GM12878 (cell line): ENCODE measurements at regions of chr5 and their contacts with region 1.

Region 1: GRCh38 chr5:157761690-157762621 is 18.4 kb downstream of the LSM11 start:
- DNase-seq: no peak
- ATAC-seq: peak; percentile 99
- H3K4me3 ChIP-seq: no peak overlapping the region
- H3K27ac ChIP-seq: no peak overlapping the region
- H3K4me1 ChIP-seq: 0 out of 2 replicates have a peak, but pooled peaks cover 3% of the 10 kb centered on the region
- H3K27me3 ChIP-seq: no peaks in the 10 kb centered on the region
- CTCF ChIP-seq: peak; percentile 71 to 81 (median 79)
- EP300 ChIP-seq: no peak
- POLR2A ChIP-seq: no peak
- RAD21 ChIP-seq: peak; percentile 73

Region 2: DNA sequence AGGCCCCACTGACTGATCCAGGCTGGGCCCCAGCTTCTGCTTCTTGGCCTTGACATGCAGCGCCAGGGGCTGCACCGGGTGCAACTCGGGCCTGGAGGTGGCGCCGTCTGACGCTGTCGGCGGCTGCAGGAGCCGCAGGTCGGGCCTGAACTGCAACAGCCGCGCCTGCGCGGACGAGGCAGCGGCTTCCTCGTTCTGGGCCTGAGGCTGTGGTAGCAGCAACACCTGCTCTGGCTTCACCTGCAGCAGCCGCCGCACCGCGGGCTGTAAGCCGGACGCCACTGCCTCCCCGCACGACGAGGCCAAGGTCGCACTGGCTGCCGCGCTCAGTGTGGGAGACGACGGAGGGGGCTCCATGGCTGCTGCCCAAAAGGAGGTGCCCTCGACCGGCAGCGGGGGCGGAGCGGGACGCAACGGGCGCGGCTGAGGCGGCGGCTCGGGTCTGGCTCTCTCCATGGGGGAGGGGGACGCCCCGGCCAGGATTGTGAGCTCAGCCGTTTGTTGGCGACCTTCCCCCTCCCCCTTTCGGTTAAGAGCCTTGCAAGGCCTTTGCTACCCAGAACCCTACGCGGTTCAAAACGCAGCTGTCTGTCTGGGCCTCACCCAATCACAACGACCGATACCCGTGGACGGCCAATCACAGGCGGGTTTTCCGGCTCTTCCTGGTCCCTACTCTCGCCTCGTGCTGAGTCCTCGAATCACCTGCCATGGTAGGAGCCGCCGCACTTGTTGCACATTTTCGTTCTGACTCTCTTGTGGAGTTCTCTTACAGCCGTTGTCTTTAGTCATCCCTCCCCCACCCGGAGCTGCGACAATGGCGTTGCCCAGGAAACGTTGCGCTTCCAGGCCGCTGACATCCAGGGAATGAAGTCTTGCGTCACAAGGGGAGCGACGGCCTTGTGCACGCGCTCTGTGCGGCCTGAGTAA is 110.1 kb before region 1 on chr5 and contains the start of gene SOX30:
- CTCF ChIA-PET with region 1: no interaction called
- POLR2A ChIA-PET with region 1: no interaction called
- RAD21 ChIA-PET with region 1: no interaction called
- SMC1A ChIA-PET with region 1: no interaction called
- in situ Hi-C with region 1: no loop called
- intact Hi-C with region 1: no loop called
- DNase-seq: peak; percentile 21
- ATAC-seq: peak; percentile 98
- H3K4me3 ChIP-seq: no peak within 1 kb of the TSS; the same call in 1 of the 2 replicates
- H3K27ac ChIP-seq: no peak within 1 kb of the TSS
- H3K4me1 ChIP-seq: no peaks in the 10 kb centered on the region
- H3K27me3 ChIP-seq: no peaks in the 10 kb centered on the region
- CTCF ChIP-seq: peak; percentile 29 to 40 (median 32); a peak in 4 of 6 replicates
- EP300 ChIP-seq: no peak
- POLR2A ChIP-seq: peak; percentile 69
- RAD21 ChIP-seq: peak; percentile 36; the same call in 1 of the 2 replicates
- polyA plus RNA-seq, gene SOX30: 0.06 to 0.07 TPM

Region 3: DNA sequence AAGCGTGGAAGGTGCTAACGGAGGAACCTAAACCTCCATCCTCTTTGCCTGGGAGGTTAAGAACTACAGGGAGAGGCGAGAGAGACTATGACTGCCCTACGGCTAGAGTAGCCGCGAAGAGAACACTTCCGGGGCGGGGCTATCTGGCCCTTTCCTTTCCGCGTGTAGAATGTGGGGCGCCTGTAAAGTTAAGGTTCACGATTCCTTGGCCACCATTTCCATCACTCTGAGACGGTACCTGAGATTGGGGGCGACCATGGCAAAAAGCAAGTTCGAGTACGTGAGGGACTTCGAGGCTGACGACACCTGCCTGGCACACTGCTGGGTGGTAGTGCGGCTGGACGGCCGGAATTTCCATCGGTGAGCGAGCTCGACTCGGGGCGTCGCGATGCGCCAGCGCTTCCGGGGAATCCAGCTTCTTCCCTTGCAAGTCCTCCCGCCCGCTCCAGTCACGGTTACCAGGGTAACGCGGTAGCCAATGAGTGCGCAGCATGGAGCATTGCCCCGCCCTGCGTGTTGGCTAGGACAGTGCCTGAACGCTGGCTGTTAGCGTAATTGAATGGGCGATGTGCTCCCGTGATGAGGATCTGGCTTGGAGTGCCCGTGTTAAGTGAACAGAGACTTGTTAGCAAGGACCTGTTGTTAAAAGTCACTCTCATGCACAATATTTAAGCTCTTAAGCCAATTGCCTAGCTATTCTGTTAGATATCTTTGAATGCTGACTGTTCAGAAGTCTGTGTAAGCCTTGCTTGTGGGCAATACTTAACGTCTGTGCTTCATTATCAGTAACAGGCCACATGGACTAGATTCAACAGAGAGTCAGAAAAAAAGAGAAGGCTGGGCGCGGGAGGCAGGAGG is 30.5 kb before region 1 on chr5 and contains the start of gene THG1L:
- CTCF ChIA-PET with region 1: no interaction called
- POLR2A ChIA-PET with region 1: no interaction called
- RAD21 ChIA-PET with region 1: no interaction called
- SMC1A ChIA-PET with region 1: no interaction called
- in situ Hi-C with region 1: no loop called
- intact Hi-C with region 1: no loop called
- DNase-seq: peak; percentile 94
- ATAC-seq: peak; percentile 92
- H3K4me3 ChIP-seq: peak within 1 kb of the TSS; percentile 85
- H3K27ac ChIP-seq: peak within 1 kb of the TSS; percentile 92
- H3K4me1 ChIP-seq: peaks cover 21% of the 10 kb centered on the region
- H3K27me3 ChIP-seq: no peaks in the 10 kb centered on the region
- CTCF ChIP-seq: no peak
- EP300 ChIP-seq: no peak
- POLR2A ChIP-seq: peak; percentile 97
- RAD21 ChIP-seq: no peak
- polyA plus RNA-seq, gene THG1L: 37.2 to 58.0 TPM

Region 4: GRCh38 chr5:157748760-157749461 is 13.0 kb before region 1 on chr5:
- CTCF ChIA-PET with region 1: interaction called, 19 read pairs
- POLR2A ChIA-PET with region 1: no interaction called
- RAD21 ChIA-PET with region 1: no interaction called
- SMC1A ChIA-PET with region 1: interaction called, 3 read pairs
- in situ Hi-C with region 1: no loop called
- intact Hi-C with region 1: no loop called
- DNase-seq: no peak
- ATAC-seq: no peak
- H3K4me3 ChIP-seq: no peak overlapping the region
- H3K27ac ChIP-seq: no peak overlapping the region
- H3K4me1 ChIP-seq: peaks cover 7% of the 10 kb centered on the region; the same call in 1 of the 2 replicates
- H3K27me3 ChIP-seq: no peaks in the 10 kb centered on the region
- CTCF ChIP-seq: no peak
- EP300 ChIP-seq: no peak
- POLR2A ChIP-seq: no peak
- RAD21 ChIP-seq: no peak

Region 5: GRCh38 chr5:157793301-157793700 is 31.3 kb after region 1 on chr5:
- CTCF ChIA-PET with region 1: interaction called, 15 read pairs
- POLR2A ChIA-PET with region 1: no interaction called
- RAD21 ChIA-PET with region 1: no interaction called
- SMC1A ChIA-PET with region 1: interaction called, 3 read pairs
- in situ Hi-C with region 1: no loop called
- intact Hi-C with region 1: no loop called
- DNase-seq: no peak
- ATAC-seq: no peak
- H3K4me3 ChIP-seq: no peak overlapping the region
- H3K27ac ChIP-seq: no peak overlapping the region
- H3K4me1 ChIP-seq: no peaks in the 10 kb centered on the region
- H3K27me3 ChIP-seq: no peaks in the 10 kb centered on the region
- CTCF ChIP-seq: no peak
- EP300 ChIP-seq: no peak
- POLR2A ChIP-seq: no peak
- RAD21 ChIP-seq: no peak

Region 6: DNA sequence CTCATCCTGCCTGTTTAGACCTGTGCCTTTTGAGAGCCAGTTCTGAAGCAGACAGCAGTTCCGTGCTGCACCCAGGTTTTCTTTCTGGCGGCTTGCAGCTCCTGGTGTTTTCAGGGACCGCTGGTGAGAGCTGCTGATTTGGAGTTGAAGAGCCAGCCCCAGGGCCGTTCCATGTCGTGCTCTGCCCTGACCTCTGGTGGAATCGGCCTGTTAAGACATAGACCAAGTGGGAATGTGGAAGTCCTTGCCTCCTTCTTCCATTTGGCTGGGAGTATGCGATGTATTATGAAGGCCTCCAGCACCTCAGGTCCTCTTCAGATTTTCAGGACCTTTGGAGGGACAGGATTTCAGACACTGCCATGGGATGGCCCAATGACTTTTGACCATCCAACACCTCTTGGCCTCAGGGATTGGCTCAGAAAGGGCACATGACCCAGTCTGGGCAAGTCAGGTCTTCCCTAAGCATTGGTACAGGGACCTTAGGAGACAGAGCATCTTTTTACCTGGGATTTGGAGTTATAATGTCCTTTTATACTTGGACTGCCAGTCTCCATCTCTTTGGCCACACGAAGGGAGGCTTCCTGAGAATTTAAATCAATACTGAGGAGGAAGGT is 233.1 kb after region 1 on chr5:
- CTCF ChIA-PET with region 1: interaction called, 25 read pairs
- POLR2A ChIA-PET with region 1: interaction called, 3 read pairs
- RAD21 ChIA-PET with region 1: interaction called, 7 read pairs
- SMC1A ChIA-PET with region 1: interaction called, 12 read pairs
- in situ Hi-C with region 1: no loop called
- intact Hi-C with region 1: loop called (anchors 1 kb)
- DNase-seq: peak; percentile 3
- ATAC-seq: peak; percentile 98
- H3K4me3 ChIP-seq: no peak overlapping the region
- H3K27ac ChIP-seq: no peak overlapping the region
- H3K4me1 ChIP-seq: no peaks in the 10 kb centered on the region
- H3K27me3 ChIP-seq: no peaks in the 10 kb centered on the region
- CTCF ChIP-seq: peak; percentile 75 to 83 (median 82)
- EP300 ChIP-seq: no peak
- POLR2A ChIP-seq: no peak
- RAD21 ChIP-seq: peak; percentile 76